Testis (tissue), 5 donors: ENCODE measurements at regions of chr17 and their contacts with region 1.

Region 1: DNA sequence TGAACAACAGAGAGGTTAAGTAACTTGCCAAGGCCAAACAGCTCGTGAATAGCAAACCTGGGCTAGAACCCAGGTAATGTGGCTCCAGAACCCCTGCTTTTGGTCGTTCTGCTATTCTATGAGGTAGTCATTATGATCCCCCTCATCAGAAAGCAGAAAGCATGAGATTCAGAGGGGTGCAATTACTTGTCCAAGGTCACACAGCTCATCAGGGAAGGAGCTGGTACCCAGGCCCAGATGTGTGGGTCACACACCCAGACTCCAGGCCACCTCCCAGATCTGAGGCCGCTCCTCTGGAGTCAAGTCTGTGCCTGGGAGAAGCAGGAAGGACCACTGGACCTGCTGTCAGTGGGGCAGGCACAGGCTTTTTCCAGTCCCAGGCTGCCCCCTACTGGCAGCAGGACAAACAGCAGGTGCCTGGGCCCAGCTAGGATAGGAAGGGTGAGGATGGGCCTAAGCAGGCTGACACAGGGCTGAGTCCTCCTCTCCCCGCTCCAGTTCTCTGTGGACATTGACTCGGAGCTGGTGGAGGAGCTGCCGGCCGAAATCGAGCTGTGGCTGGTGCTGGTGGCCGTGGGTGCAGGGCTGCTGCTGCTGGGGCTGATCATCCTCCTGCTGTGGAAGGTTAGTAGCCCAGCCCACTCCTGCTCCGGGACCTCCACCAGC is 7.8 kb upstream of the PDK2 start:
- DNase-seq: peak; percentile 79
- H3K4me3 ChIP-seq: no peak overlapping the region
- H3K27ac ChIP-seq: no peak overlapping the region
- H3K4me1 ChIP-seq: no peaks in the 10 kb centered on the region
- H3K27me3 ChIP-seq: no peaks in the 10 kb centered on the region
- CTCF ChIP-seq: peak; percentile 92 to 96 (median 92)
- POLR2A ChIP-seq: no peak

Region 2: DNA sequence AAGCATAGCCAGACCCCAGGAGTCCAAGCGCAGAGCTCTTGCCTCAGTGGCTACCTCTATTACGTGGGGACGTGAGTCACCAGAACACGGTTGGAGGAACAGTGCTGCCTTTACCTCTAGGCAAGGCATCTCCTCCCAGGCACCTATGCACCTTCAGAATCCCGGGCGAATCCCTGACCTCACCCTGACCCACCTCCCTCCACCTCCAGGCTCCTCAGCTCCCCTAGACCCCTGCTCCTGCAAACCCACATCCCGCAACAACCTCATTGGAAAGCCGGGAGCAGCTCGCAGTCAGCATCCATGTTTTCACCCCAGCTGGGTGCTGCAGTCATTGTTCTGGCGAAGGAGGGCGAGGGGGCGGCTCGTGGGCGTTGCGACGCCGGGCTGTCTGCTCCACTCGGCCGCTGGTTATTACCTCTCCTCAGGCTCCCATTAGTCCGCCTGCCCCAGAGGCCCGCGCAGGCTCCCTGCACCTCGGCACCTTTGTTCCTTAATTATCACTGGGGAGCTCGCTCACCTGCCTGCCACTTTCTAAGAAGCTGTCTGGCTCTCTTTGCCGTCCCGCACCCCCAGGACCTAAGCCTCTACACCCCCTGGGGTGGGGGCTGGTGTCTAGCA is 143.0 kb before region 1 on chr17:
- intact Hi-C with region 1: no loop called
- DNase-seq: no peak
- H3K4me3 ChIP-seq: peak overlapping the region in 1 of 2 donors; percentile 29
- H3K27ac ChIP-seq: no peak overlapping the region
- H3K4me1 ChIP-seq: no peaks in the 10 kb centered on the region
- H3K27me3 ChIP-seq: no peaks in the 10 kb centered on the region
- CTCF ChIP-seq: no peak
- POLR2A ChIP-seq: no peak

Region 3: DNA sequence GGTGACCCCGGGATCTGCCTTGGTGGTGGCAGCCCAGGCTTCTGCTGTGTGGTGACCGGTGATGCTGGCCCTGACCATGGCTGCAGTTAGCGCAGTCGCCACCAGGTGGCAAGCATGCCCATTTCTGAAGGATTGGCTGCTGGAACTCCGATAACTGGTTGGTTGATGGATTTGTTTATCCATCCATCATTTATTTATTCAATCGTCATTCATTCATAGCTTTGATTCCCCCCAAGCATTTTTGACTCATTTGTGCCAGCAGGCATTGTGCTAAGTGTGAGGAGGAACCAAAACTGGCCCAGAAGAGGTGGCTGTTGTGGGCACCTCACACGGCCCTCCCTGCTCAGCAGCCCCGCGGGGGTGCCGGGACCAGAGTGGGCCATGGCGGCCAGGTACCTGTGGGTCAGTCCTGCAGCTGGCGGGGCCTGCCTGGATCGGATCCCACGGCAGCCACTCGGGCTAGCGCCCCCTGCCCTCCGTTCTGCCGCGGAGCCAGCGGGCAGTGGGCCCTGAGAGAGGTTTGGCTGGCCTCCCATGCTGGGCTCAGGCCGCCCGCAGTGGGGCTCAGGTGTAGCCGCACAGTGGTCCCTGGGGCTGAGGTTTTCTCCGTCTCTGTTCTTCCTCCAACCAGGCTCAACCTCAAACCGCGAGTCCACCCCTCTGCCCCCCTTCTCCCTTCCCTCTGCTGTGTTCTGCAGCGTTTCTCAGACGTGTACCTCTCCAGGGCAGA is 60.3 kb before region 1 on chr17:
- intact Hi-C with region 1: loop called (anchors 5 kb)
- DNase-seq: peak; percentile 90
- H3K4me3 ChIP-seq: peak overlapping the region in 1 of 2 donors; percentile 1
- H3K27ac ChIP-seq: no peak overlapping the region
- H3K4me1 ChIP-seq: no peaks in the 10 kb centered on the region
- H3K27me3 ChIP-seq: no peaks in the 10 kb centered on the region
- CTCF ChIP-seq: peak; percentile 95 to 96 (median 96)
- POLR2A ChIP-seq: no peak